Posterior cingulate gyrus (tissue), 11 donors: ENCODE measurements at regions of chr5 and their contacts with region 1.

Region 1: DNA sequence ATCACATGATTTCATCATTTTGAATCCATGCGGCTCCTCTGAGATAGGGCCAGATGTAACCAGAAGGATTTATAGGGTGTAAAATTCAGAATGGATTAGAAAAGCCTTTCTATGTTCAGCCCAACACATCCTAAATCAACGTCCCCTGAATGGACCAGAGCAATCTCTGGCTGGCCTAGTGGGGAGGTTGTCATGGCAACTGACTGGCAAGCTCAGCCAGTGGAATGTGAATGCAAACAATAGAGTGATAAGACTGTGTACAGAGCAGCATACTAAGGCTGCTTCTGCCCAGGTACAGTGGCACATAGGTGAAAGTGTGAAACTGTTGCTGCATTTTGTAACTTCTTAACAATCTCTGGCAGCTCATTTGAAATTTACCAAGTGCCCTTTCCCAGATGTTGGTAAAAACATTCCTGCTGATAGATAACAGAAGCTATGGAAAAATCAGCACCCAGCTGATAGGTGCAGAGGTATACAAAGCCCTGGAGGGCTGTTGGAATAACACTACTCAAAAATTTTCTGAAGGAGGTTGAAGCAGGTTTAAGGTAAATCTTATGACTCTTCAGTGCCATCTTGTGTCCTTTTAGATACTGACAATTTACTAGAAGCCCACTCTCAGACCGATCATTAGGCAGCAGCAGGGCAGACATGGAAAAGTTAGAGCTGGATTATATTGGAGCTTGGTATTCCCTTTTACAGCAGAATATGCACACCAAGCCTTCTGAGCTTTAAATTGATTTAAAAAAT is 267.2 kb downstream of the RAB3C start:
- DNase-seq: peak in 6 of 10 donors; percentile 12 to 88 (median 45)

Region 2: GRCh38 chr5:58498340-58498942 is 351.7 kb before region 1 on chr5:
- intact Hi-C with region 1: loop called (anchors 2 kb)
- DNase-seq: peak in 6 of 10 donors; percentile 20 to 73 (median 38)